Activated CD4-positive, alpha-beta memory T cell treated with anti-CD3 and anti-CD28 coated beads for 36 hours (primary cell): ENCODE measurements at regions of chr22 and their contacts with region 1.

Region 1: DNA sequence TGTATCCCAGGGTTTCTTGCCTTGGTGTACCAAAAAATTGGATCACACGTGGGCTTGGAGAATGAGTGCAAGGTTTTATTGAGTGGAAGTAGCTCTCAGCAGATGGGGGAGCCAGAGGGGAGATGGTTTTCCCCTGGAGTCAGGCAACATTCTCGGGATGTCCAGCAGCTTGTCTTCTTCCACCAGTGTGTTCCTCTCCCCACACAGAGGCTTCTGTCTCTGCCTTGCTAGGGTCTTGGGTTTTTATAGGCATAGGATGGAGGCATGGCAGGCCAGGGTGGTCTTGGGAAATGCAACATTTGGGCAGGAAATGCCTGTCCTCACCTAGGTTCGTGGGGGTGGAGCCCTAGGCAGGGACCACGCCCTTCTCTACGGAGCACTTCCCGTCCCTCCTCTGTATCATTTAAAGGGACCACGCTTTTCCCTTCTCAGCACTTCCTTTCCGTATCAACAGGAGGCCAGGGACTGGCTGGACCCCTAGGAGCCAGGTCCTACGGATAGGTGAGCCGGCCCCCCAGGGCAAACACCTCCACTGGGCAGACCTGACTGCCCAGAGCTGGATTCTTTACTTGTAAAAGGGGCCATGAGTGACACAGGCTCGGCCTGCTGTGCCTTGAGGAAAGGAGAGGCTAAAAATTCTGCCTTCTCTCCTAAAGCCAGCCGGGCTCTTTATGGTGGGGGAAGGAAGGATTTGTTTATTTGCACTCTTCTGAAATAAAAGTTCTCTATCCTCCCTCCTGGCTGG is 55.3 kb upstream of the CCDC188 start:
- DNase-seq: peak; percentile 80
- H3K4me3 Mint-ChIP-seq: peak overlapping the region; percentile 89
- H3K27ac Mint-ChIP-seq: peak overlapping the region; percentile 81
- H3K4me1 Mint-ChIP-seq: peaks cover 25% of the 10 kb centered on the region
- H3K27me3 Mint-ChIP-seq: no peaks in the 10 kb centered on the region

Region 2: DNA sequence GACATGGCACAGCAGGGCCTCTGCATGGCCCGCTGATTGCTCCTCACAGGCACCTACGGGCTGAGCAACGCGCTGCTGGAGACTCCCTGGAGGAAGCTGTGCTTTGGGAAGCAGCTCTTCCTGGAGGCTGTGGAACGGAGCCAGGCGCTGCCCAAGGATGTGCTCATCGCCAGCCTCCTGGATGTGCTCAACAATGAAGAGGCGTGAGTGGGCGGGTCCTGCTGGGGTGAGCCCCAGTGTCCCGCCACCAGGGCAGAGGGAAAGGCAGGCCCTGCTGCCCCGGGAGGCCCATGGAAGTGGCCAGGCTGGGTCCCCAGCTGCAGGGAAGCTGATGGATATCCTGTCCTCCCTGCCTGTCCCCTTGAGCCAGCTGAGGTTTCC is 144.7 kb before region 1 on chr22:
- CTCF ChIA-PET with region 1: no interaction called
- POLR2A ChIA-PET with region 1: no interaction called
- intact Hi-C with region 1: no loop called
- DNase-seq: no peak
- H3K4me3 Mint-ChIP-seq: no peak overlapping the region
- H3K27ac Mint-ChIP-seq: no peak overlapping the region
- H3K4me1 Mint-ChIP-seq: no peaks in the 10 kb centered on the region
- H3K27me3 Mint-ChIP-seq: no peaks in the 10 kb centered on the region

Region 3: GRCh38 chr22:20174785-20175596 is 31.1 kb before region 1 on chr22:
- CTCF ChIA-PET with region 1: no interaction called
- POLR2A ChIA-PET with region 1: no interaction called
- intact Hi-C with region 1: no loop called
- DNase-seq: no peak
- H3K4me3 Mint-ChIP-seq: no peak overlapping the region
- H3K27ac Mint-ChIP-seq: no peak overlapping the region
- H3K4me1 Mint-ChIP-seq: no peaks in the 10 kb centered on the region
- H3K27me3 Mint-ChIP-seq: peaks cover 3% of the 10 kb centered on the region

Region 4: GRCh38 chr22:20268279-20269012 is 62.3 kb after region 1 on chr22 and contains the start of gene RTN4R:
- CTCF ChIA-PET with region 1: no interaction called
- POLR2A ChIA-PET with region 1: no interaction called
- intact Hi-C with region 1: loop called (anchors 10 kb)
- DNase-seq: peak; percentile 70
- H3K4me3 Mint-ChIP-seq: peak within 1 kb of the TSS; percentile 45
- H3K27ac Mint-ChIP-seq: no peak within 1 kb of the TSS
- H3K4me1 Mint-ChIP-seq: peaks cover 3% of the 10 kb centered on the region
- H3K27me3 Mint-ChIP-seq: peaks cover 3% of the 10 kb centered on the region
- total RNA-seq, gene RTN4R: 2.6 to 3.1 TPM